Caco-2 (cell line): ENCODE measurements at regions of chr10 and their contacts with region 1.

Region 1: GRCh38 chr10:60114765-60115586 is 208.6 kb upstream of the CCDC6 start:
- DNase-seq: peak in 1 of 2 experiments; percentile 77
- H3K4me3 ChIP-seq: no peak overlapping the region
- H3K4me3 Mint-ChIP-seq: no peak overlapping the region
- H3K27ac Mint-ChIP-seq: no peak overlapping the region
- H3K4me1 ChIP-seq: no peaks in the 10 kb centered on the region
- H3K4me1 Mint-ChIP-seq: no peaks in the 10 kb centered on the region
- H3K27me3 ChIP-seq: no peaks in the 10 kb centered on the region
- H3K27me3 Mint-ChIP-seq: no peaks in the 10 kb centered on the region
- CTCF ChIP-seq: peak; percentile 85 to 86

Region 2: DNA sequence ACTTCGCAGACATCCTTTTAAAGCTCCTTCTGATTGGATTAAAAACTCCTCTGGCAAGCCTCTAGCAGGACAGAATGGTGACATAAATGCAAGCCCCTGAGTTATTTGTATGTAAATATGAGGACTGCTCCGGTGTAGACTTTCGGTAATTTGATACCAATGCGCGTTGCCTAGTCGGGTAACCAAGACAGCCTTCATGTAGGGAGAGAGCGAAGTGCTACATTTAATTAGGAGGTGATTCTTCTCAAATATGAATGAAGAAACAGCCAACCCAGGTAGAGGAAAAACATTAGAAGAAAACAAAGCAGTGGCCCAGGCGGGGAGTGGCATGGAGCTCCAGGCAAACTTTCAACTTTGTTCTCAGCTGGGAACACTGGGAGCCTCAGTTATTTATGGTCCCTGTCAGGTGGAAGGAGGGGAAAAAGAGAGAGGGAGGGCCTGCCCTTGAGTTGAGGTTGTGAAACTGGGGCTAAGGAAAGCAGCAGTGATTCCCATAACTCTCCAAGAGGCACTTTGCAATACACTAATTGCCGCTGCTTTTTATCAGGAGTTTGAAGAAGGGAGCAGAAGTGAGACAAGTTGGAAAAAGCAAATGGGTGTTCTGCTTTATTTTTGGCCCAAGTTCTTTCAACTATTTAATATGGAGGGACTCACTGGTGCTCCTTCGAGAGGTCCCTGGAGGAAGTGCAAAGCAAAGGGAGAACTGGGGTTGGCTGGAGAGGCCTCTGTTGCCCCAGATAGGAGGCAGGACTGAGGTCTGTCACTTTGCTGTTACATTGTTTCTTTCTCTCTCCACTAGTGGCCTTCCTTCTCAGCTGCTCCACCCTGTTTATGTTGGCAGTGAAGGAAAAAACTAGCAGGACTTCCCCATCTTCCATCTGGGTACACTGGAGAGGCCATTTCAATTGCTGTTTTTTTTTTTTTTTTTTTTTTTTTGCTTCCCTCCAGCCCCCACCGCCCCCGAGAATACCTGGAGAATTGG is 26.0 kb after region 1 on chr10:
- CTCF ChIA-PET with region 1: interaction called, 3 read pairs
- POLR2A ChIA-PET with region 1: interaction called, 3 read pairs
- intact Hi-C with region 1: loop called (anchors 1 kb)
- DNase-seq: peak; percentile 81 to 83
- H3K4me3 ChIP-seq: peak overlapping the region; percentile 38
- H3K4me3 Mint-ChIP-seq: no peak overlapping the region
- H3K27ac Mint-ChIP-seq: no peak overlapping the region
- H3K4me1 ChIP-seq: peaks cover 61% of the 10 kb centered on the region
- H3K4me1 Mint-ChIP-seq: peaks cover 13% of the 10 kb centered on the region
- H3K27me3 ChIP-seq: no peaks in the 10 kb centered on the region
- H3K27me3 Mint-ChIP-seq: no peaks in the 10 kb centered on the region
- CTCF ChIP-seq: peak in 1 of 2 experiments; percentile 0

Region 3: GRCh38 chr10:60155943-60156683 is 41.1 kb after region 1 on chr10:
- CTCF ChIA-PET with region 1: interaction called, 4 read pairs
- POLR2A ChIA-PET with region 1: no interaction called
- intact Hi-C with region 1: loop called (anchors 1 kb)
- DNase-seq: no peak
- H3K4me3 ChIP-seq: no peak overlapping the region
- H3K4me3 Mint-ChIP-seq: no peak overlapping the region
- H3K27ac Mint-ChIP-seq: no peak overlapping the region
- H3K4me1 ChIP-seq: no peaks in the 10 kb centered on the region
- H3K4me1 Mint-ChIP-seq: no peaks in the 10 kb centered on the region
- H3K27me3 ChIP-seq: no peaks in the 10 kb centered on the region
- H3K27me3 Mint-ChIP-seq: no peaks in the 10 kb centered on the region
- CTCF ChIP-seq: no peak

Region 4: DNA sequence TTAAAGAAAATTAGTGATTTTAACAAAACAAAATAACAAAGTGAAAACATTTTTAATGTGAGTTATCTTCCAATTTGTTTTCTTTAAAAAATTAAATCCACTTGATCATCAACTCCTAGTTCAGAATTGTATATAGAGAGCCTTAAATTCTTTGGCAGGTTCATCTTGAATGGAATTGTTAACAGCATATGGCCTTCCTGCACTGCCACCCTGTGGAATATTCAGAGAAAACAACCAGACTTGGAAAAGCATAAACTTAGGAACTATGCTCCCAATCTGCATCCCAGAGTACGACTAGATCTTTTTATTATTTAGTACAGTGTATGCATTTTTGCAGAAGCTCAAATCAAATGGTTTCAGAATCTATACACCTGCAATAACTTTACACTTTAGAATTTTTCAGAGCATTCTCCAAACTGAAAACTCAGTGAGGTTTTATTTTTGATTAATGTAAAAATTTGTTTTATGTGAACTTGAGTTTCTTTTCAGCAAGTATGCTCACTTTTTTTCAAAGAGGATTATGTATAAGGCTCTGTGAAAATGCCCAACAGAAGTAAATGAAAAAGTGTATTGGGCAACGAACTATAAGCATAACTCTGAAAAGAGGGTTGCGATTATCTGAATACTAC is 319.6 kb after region 1 on chr10:
- CTCF ChIA-PET with region 1: no interaction called
- POLR2A ChIA-PET with region 1: no interaction called
- intact Hi-C with region 1: loop called (anchors 1 kb)
- DNase-seq: peak; percentile 55 to 76
- H3K4me3 ChIP-seq: no peak overlapping the region
- H3K4me3 Mint-ChIP-seq: no peak overlapping the region
- H3K27ac Mint-ChIP-seq: no peak overlapping the region
- H3K4me1 ChIP-seq: no peaks in the 10 kb centered on the region
- H3K4me1 Mint-ChIP-seq: no peaks in the 10 kb centered on the region
- H3K27me3 ChIP-seq: no peaks in the 10 kb centered on the region
- H3K27me3 Mint-ChIP-seq: no peaks in the 10 kb centered on the region
- CTCF ChIP-seq: peak; percentile 84 to 90